ENCODE measurements at regions of chr1 and their contacts with region 1.

Region 1: DNA sequence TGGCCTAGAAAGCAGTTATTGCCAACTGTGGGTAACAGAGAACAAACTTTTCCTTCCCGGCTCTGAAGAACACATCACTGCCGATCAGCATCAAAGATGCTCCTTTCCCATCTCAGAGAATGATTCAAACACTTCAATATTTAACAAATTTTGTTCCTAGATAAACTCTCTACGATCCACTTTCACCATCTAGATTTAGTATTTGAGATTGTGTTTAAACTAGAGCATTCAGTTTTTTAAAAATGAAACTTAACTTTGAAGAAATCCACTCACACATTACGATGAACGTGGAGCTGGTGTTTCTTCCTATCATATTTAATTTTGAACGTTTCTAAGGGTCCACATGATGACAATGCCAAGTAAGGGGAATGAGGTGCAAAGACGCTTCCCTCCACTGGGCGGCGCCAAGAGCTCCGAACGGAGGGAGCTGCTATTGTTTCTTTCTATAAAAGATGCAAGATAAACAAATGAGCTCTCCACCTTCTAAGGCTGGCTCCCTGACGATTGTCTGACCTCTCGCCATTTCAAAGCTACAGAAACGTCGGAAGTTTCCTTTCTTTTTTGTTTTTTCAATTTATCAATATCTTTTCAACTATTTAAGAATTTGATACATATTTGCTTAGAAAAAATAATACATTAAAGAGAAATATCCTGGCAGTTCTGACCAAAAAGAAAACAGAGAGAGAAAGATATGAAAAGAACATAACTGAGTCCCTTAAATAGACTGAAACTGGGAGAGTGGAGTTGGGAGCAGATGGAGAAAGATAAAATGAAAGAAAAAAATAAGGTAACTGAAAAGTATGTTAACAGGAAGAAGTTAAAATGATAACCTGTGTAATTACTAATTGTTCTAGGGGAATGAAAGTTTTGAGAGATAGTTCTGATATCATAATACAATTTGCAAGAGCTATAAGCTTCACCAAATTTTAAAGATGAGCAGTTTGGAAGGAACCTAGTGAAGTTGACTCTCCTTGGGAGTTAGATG is 4.4 kb upstream of the BARHL2 start:
- DNase-seq: peak; percentile 50
- ATAC-seq: peak; percentile 69
- H3K4me3 ChIP-seq: no peak overlapping the region
- H3K27ac ChIP-seq: no peak overlapping the region
- H3K4me1 ChIP-seq: no peaks in the 10 kb centered on the region
- H3K27me3 ChIP-seq: no peaks in the 10 kb centered on the region; the same call in 1 of the 2 replicates
- CTCF ChIP-seq: peak; percentile 99

Region 2: DNA sequence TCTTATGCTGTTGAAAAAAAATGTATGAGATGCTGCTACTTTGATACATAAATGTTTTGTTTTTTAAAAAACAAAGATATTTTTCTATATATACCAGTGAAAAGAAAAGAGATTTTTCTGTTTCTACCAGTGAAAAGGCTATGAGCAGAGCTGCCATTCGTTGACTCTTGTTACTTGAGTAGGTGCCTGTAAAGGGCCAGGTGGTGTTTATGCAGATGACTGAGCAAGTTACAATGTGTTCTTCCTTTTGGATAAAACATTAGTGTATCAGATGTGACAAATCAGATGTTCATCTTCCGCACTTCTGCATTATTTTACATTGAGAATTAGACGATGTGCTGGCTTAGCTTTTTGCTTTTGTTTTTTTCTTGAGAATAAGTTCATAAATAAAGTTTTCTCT is 49.8 kb before region 1 on chr1:
- CTCF ChIA-PET with region 1: no interaction called
- POLR2A ChIA-PET with region 1: no interaction called
- in situ Hi-C with region 1: no loop called
- intact Hi-C with region 1: no loop called
- DNase-seq: no peak
- ATAC-seq: no peak
- H3K4me3 ChIP-seq: no peak overlapping the region
- H3K27ac ChIP-seq: no peak overlapping the region
- H3K4me1 ChIP-seq: no peaks in the 10 kb centered on the region
- H3K27me3 ChIP-seq: no peaks in the 10 kb centered on the region
- CTCF ChIP-seq: no peak

Region 3: GRCh38 chr1:90753556-90753955 is 32.1 kb after region 1 on chr1:
- CTCF ChIA-PET with region 1: no interaction called
- POLR2A ChIA-PET with region 1: no interaction called
- in situ Hi-C with region 1: no loop called
- intact Hi-C with region 1: no loop called
- DNase-seq: no peak
- ATAC-seq: no peak
- H3K4me3 ChIP-seq: no peak overlapping the region
- H3K27ac ChIP-seq: no peak overlapping the region
- H3K4me1 ChIP-seq: no peaks in the 10 kb centered on the region
- H3K27me3 ChIP-seq: peaks cover 30% of the 10 kb centered on the region
- CTCF ChIP-seq: no peak

Region 4: GRCh38 chr1:90850898-90851710 is 129.6 kb after region 1 on chr1:
- CTCF ChIA-PET with region 1: interaction called, 5 read pairs
- POLR2A ChIA-PET with region 1: no interaction called
- in situ Hi-C with region 1: no loop called
- intact Hi-C with region 1: loop called (anchors 5 kb)
- DNase-seq: no peak
- ATAC-seq: peak; percentile 99
- H3K4me3 ChIP-seq: peak overlapping the region; percentile 75 to 85
- H3K27ac ChIP-seq: peak overlapping the region; percentile 71
- H3K4me1 ChIP-seq: 0 out of 2 replicates have a peak, but pooled peaks cover 3% of the 10 kb centered on the region
- H3K27me3 ChIP-seq: no peaks in the 10 kb centered on the region
- CTCF ChIP-seq: peak; percentile 96

Region 5: DNA sequence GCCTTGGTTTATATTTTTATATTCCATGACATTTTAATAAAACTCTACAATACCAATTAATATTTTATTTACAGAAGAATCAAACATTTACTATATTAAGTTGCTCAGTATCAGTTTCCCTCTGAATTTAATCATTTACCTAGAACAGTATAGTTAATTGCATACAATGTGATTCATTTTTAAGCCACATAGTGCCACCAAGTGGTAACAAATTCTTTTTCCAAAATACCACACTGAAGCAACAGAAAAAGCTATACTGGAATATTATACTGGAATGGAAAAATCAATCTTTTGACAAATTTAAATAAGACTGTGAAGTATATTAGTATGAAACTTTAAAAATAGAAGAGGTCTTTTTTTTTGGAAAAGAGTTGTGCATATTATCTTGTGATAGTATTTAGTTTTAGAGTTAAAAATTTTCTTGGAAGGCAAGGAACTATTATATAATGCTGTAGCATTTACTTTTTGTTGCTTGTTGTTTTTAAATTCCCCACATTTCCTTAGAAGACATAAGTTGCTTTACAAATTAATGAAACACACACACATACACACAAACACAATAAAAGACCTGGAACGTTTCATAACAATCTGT is 243.0 kb after region 1 on chr1:
- CTCF ChIA-PET with region 1: interaction called, 7 read pairs
- POLR2A ChIA-PET with region 1: no interaction called
- in situ Hi-C with region 1: no loop called
- intact Hi-C with region 1: loop called (anchors 1 kb)
- DNase-seq: peak; percentile 4
- ATAC-seq: peak; percentile 76; the same call in 1 of the 2 replicates
- H3K4me3 ChIP-seq: no peak overlapping the region
- H3K27ac ChIP-seq: no peak overlapping the region
- H3K4me1 ChIP-seq: no peaks in the 10 kb centered on the region
- H3K27me3 ChIP-seq: no peaks in the 10 kb centered on the region
- CTCF ChIP-seq: peak; percentile 27; the same call in 1 of the 2 replicates

Measured in Panc1 (cell line).